Posterior vena cava (tissue), 2 donors: ENCODE measurements at regions of chr11 and their contacts with region 1.

Region 1: DNA sequence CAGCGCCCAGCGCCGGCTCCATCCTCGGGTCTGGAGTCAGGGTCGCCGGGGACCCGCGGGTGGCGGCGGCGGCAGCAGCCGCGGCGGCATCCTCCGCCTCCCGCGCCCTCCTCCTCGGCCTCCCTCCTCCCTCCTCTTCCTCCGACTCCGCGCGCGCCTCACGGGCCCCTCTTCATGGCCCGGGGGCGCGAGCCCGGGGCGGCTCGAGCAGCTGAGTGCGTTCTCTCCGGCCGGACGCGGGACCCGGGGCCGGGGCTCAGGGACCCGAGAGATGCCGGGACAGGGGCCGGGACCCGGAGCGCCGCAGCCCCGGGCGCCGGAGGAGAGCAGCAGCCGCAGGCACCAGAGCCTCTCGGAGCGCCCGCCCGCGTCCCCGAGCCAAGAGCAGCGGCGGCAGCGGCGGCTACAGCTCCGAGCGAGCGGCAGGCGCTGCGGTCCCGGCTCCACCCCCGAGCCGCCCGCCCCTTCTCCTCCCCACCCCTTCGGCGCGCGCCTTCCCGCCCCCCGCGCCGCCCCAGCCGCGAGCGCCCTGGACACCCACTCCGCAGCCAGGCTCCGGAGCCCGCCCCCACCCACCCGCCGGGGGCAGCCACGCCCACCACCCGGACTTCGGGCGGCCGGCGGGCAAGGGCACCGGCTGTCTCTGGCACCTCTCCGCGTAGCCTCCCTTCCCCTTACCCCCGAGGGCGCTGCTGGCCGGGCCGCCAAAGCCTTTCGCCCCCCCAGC is at the start of gene CHST1:
- DNase-seq: peak; percentile 82
- total RNA-seq, gene CHST1: 3.3 to 5.2 TPM

Region 2: GRCh38 chr11:44804449-44805437 is 860.6 kb before region 1 on chr11:
- intact Hi-C with region 1: loop called in 1 of 2 experiments (anchors 5 kb)
- DNase-seq: no peak

Region 3: DNA sequence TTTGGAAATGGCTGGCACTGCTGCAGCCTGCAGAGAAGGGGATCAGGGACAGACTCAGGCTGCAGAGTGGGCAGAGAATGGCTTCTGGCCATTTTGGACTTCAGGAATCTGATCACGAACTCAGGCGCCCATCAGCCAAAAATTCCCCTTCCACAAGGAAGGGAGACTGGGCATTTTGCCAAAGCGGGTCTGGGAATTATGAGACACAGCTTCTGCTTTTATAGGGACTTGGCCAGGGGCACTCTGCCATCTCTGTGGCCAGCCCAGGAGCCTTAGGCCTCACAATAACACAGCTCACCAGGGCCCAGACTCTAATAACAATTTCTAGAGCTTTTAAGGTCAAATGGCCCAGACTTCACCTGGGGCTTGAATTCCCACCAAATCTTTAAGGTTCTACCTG is 74.6 kb before region 1 on chr11:
- intact Hi-C with region 1: no loop called
- DNase-seq: peak; percentile 84